ENCODE measurements at regions of chr3 and their contacts with region 1.

Region 1: DNA sequence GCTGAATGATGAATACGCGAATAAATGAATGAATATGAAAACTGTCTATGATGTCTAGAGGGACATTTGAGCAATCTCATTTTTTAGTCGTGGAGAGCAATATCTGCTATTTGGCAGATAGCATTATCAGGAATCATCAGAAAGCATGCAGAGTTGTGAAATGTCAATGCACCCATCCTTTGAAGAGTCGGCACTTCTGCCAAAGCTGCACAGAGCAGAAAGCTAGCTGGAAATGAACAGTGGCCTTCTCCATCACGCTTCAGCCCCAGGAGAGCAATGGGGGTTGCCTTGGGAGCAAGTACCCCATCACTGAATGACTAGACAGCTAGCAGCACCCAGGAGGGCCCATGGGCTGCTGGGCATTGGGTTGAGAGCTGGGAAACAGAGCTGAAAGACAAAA is 69.1 kb upstream of the PROK2 start:
- DNase-seq: no peak
- H3K4me3 ChIP-seq: no peak overlapping the region
- H3K27ac ChIP-seq: peak overlapping the region in 5 of 59 donors; percentile 2 to 42 (median 13)
- H3K27me3 ChIP-seq: peaks cover 0 to 10% (median 0%) of the 10 kb centered on the region in 45 donors
- CTCF ChIP-seq: no peak

Region 2: DNA sequence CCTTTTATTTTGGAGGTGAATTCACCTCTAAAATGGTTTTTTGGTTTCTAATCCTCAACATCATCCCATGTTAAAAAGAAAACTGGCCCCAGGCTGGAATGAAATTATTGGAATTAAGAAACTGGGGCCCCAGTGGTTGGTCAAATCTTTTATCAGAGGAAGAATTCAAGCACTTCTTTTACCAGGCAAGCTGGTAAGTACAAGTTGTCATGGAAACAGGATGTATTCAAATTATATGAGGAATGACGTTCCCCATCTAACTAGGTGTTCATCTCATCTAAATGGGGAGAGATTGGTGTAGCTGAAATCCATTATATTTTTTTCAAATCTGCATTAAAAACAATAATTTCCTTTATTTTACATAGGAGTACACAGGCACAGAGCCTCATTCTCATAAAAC is 119.2 kb before region 1 on chr3:
- intact Hi-C with region 1: loop called in 1 of 2 experiments (anchors 5 kb)
- DNase-seq: no peak
- H3K4me3 ChIP-seq: no peak overlapping the region
- H3K27ac ChIP-seq: no peak overlapping the region
- H3K27me3 ChIP-seq: no peaks in the 10 kb centered on the region
- CTCF ChIP-seq: no peak

Measured in dorsolateral prefrontal cortex (tissue), 120 donors.